Panc1 (cell line): ENCODE measurements at regions of chr13 and their contacts with region 1.

Region 1: DNA sequence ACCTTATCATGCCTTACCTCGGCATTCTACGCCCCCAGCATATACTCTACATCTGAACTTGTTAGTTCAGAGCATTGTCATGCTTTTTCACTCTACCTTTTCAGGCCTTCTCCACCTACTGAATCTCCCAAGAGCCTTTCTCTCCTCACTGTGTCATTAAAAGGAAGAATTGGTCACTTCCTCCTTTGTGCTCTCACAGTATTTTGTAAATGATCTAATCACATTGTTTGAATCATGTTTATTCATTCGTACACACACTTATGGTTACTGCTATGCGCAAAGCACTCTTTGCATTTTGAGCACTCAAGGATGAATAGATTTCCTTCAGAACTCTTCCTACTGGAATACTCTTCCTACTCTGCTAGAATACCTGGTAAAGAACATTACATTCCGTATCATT is 15.8 kb upstream of the ELF1 start:
- DNase-seq: no peak
- ATAC-seq: no peak
- H3K4me3 ChIP-seq: no peak overlapping the region
- H3K27ac ChIP-seq: no peak overlapping the region
- H3K4me1 ChIP-seq: no peaks in the 10 kb centered on the region
- H3K27me3 ChIP-seq: no peaks in the 10 kb centered on the region
- CTCF ChIP-seq: no peak

Region 2: GRCh38 chr13:41054212-41054877 is 19.5 kb after region 1 on chr13:
- CTCF ChIA-PET with region 1: no interaction called
- POLR2A ChIA-PET with region 1: interaction called, 11 read pairs
- in situ Hi-C with region 1: no loop called
- intact Hi-C with region 1: no loop called
- DNase-seq: no peak
- ATAC-seq: peak; percentile 61; the same call in 1 of the 2 replicates
- H3K4me3 ChIP-seq: peak overlapping the region; percentile 3 to 28; a peak in 3 of 4 replicates
- H3K27ac ChIP-seq: peak overlapping the region; percentile 58
- H3K4me1 ChIP-seq: peaks cover 52% of the 10 kb centered on the region
- H3K27me3 ChIP-seq: no peaks in the 10 kb centered on the region
- CTCF ChIP-seq: peak; percentile 65

Region 3: GRCh38 chr13:41345914-41346589 is 311.2 kb after region 1 on chr13:
- CTCF ChIA-PET with region 1: no interaction called
- POLR2A ChIA-PET with region 1: no interaction called
- in situ Hi-C with region 1: no loop called
- intact Hi-C with region 1: no loop called
- DNase-seq: no peak
- ATAC-seq: no peak
- H3K4me3 ChIP-seq: no peak overlapping the region
- H3K27ac ChIP-seq: no peak overlapping the region
- H3K4me1 ChIP-seq: peaks cover 4% of the 10 kb centered on the region; the same call in 1 of the 2 replicates
- H3K27me3 ChIP-seq: no peaks in the 10 kb centered on the region
- CTCF ChIP-seq: no peak